B cell (primary cell): ENCODE measurements at regions of chr1 and their contacts with region 1.

Region 1: GRCh38 chr1:112466078-112466660 is 42.6 kb upstream of the WNT2B start:
- DNase-seq: peak; percentile 94
- ATAC-seq: peak; percentile 97
- H3K4me3 ChIP-seq: peak overlapping the region; percentile 5 to 51 (median 50)
- H3K4me3 Mint-ChIP-seq: peak overlapping the region; percentile 83
- H3K27ac ChIP-seq: peak overlapping the region; percentile 74 to 75
- H3K27ac Mint-ChIP-seq: peak overlapping the region; percentile 83
- H3K4me1 ChIP-seq: peaks cover 27 to 40% of the 10 kb centered on the region in 2 donors
- H3K4me1 Mint-ChIP-seq: peaks cover 46% of the 10 kb centered on the region
- H3K27me3 ChIP-seq: peaks cover 0 to 21% (median 12%) of the 10 kb centered on the region in 4 experiments
- H3K27me3 Mint-ChIP-seq: peaks cover 19% of the 10 kb centered on the region
- CTCF ChIP-seq: peak; percentile 75

Region 2: DNA sequence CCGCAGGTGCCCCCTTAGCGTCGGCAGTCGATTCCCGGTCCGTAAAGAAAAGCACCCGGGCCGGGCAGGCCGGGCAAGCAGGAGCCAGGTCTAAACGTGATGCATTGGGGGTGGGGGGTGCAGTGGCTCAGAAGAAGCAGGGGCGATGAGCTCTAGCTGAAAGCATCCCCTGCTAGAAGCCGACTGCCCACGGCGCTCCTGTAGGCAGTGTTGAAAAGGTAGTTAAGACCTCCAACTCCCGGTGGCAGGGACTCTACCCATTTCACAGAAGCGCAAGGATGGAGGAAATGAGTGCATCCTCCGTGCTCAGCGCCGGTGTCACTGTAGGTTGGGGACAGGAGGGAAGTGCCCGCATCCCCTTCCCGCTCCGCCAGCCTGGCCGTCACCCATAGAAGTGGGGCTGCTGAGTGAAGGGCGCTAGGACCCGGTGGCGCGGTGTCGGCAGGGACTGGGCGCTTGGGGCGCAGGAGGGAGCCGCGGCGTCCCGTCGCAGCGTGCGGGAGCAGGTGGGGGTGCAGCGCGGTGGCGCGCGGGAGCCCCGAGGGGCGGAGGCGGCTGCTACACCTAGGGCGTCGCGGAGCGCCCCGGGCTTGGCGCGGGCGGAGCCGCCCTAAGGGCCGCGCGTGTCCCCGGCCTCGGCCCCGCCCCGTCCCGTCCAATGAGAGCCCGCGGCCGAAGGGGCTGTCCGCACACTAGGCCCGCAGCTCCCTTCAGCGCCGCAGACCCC is 42.3 kb after region 1 on chr1 and contains the start of gene WNT2B:
- CTCF ChIA-PET with region 1: interaction called, 3 read pairs
- POLR2A ChIA-PET with region 1: no interaction called
- intact Hi-C with region 1: loop called (anchors 1 kb)
- DNase-seq: peak; percentile 71
- ATAC-seq: peak; percentile 63
- H3K4me3 ChIP-seq: peak within 1 kb of the TSS; percentile 35 to 67 (median 56)
- H3K4me3 Mint-ChIP-seq: peak within 1 kb of the TSS; percentile 89
- H3K27ac ChIP-seq: no peak within 1 kb of the TSS
- H3K27ac Mint-ChIP-seq: peak within 1 kb of the TSS; percentile 46
- H3K4me1 ChIP-seq: peaks cover 36 to 49% of the 10 kb centered on the region in 2 donors
- H3K4me1 Mint-ChIP-seq: peaks cover 36% of the 10 kb centered on the region
- H3K27me3 ChIP-seq: peaks cover 0 to 63% (median 14%) of the 10 kb centered on the region in 4 experiments
- H3K27me3 Mint-ChIP-seq: peaks cover 17% of the 10 kb centered on the region
- CTCF ChIP-seq: no peak
- total RNA-seq, gene WNT2B: 5.2 and 5.9 TPM in 2 replicates

Region 3: DNA sequence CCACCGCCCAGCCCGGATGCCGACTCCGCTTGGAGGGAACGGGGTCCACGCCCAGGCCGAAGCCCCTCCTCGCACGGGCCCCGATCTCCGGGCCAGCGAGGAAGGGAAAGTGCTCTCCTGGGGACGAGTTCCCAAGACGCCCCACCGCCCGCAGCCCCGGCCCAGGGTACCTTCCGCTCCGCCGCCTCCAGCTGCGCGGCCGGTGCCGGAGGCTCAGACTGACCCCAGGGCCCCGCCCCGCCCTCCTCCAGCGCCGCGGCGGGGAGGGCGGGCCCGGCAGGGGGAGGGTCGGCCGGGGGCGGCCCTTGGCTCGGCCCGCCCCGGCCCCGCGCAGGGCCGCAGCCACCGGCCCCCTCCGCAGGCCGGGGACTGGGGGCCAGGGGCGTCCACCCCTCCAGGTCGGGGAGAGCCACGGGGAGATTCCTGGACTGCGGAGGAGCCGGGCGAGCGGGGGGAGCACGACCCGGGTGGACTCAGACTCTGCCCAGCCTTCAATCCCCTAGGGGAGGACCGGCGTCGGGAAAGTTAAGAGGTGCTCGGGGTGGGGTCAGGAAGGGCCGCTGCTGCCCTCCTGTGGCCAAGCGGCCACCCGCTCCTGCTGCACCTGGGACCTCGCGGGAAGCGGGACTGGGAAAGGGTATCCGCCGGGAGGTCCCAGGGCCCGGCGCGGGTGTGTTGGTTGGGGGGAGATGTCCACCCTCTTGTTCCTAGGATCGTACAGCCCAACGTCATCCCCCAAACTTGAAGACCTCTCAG is 240.9 kb after region 1 on chr1 and contains the start of gene RHOC:
- CTCF ChIA-PET with region 1: interaction called, 9 read pairs
- POLR2A ChIA-PET with region 1: interaction called, 3 read pairs
- intact Hi-C with region 1: loop called (anchors 1 kb)
- DNase-seq: peak; percentile 81
- ATAC-seq: peak; percentile 85
- H3K4me3 ChIP-seq: peak within 1 kb of the TSS in 4 of 5 experiments; percentile 56 to 74 (median 66)
- H3K4me3 Mint-ChIP-seq: peak within 1 kb of the TSS; percentile 88
- H3K27ac ChIP-seq: peak within 1 kb of the TSS in 1 of 2 donors; percentile 49
- H3K27ac Mint-ChIP-seq: peak within 1 kb of the TSS; percentile 81
- H3K4me1 ChIP-seq: peaks cover 34 to 46% of the 10 kb centered on the region in 2 donors
- H3K4me1 Mint-ChIP-seq: peaks cover 50% of the 10 kb centered on the region
- H3K27me3 ChIP-seq: no peaks in the 10 kb centered on the region
- H3K27me3 Mint-ChIP-seq: no peaks in the 10 kb centered on the region
- CTCF ChIP-seq: peak; percentile 72
- total RNA-seq, gene RHOC: 18.5 and 21.0 TPM in 2 replicates